PC-9 (cell line): ENCODE measurements at regions of chr12 and their contacts with region 1.

Region 1: GRCh38 chr12:79935021-79935623 is at the start of gene PPP1R12A:
- DNase-seq: peak; percentile 88 to 97
- H3K4me3 ChIP-seq: peak within 1 kb of the TSS; percentile 70
- H3K27ac ChIP-seq: peak within 1 kb of the TSS; percentile 71
- H3K4me1 ChIP-seq: peaks cover 29% of the 10 kb centered on the region
- H3K27me3 ChIP-seq: no peaks in the 10 kb centered on the region
- CTCF ChIP-seq: no peak
- total RNA-seq, gene PPP1R12A: 55.8 and 69.9 TPM in 2 replicates

Region 2: DNA sequence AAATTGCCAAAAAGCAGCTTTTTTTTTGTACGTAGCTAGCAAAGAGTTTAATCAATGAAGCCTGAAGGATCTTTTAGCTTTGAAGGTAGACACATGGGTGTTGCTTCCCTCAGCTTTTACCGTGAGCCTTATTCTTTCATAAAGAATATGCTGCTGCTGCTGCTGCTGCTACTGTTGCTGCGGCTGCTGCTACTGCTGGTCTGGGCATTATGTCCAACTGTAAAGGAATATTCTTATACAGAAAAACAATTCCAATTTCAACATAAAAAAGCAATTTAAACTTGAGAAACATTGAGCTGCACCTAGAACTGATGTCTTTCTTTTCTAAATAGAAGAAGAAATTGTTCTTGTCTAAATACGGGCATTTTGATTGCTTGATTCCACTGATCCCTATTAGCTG is 38.7 kb after region 1 on chr12:
- CTCF ChIA-PET with region 1: no interaction called
- POLR2A ChIA-PET with region 1: interaction called, 10 read pairs
- intact Hi-C with region 1: no loop called
- DNase-seq: no peak
- H3K4me3 ChIP-seq: no peak overlapping the region
- H3K27ac ChIP-seq: no peak overlapping the region
- H3K4me1 ChIP-seq: 0 out of 2 replicates have a peak, but pooled peaks cover 7% of the 10 kb centered on the region
- H3K27me3 ChIP-seq: no peaks in the 10 kb centered on the region
- CTCF ChIP-seq: no peak

Region 3: GRCh38 chr12:80087486-80088213 is 152.5 kb after region 1 on chr12:
- CTCF ChIA-PET with region 1: no interaction called
- POLR2A ChIA-PET with region 1: no interaction called
- intact Hi-C with region 1: no loop called
- DNase-seq: no peak
- H3K4me3 ChIP-seq: no peak overlapping the region
- H3K27ac ChIP-seq: no peak overlapping the region
- H3K4me1 ChIP-seq: no peaks in the 10 kb centered on the region
- H3K27me3 ChIP-seq: no peaks in the 10 kb centered on the region
- CTCF ChIP-seq: no peak

Region 4: GRCh38 chr12:80118565-80119324 is 183.6 kb after region 1 on chr12:
- CTCF ChIA-PET with region 1: no interaction called
- POLR2A ChIA-PET with region 1: no interaction called
- intact Hi-C with region 1: no loop called
- DNase-seq: no peak
- H3K4me3 ChIP-seq: no peak overlapping the region
- H3K27ac ChIP-seq: no peak overlapping the region
- H3K4me1 ChIP-seq: no peaks in the 10 kb centered on the region
- H3K27me3 ChIP-seq: no peaks in the 10 kb centered on the region
- CTCF ChIP-seq: no peak